ENCODE measurements at regions of chr19 and their contacts with region 1.

Region 1: GRCh38 chr19:8028951-8029491 is 23.5 kb upstream of the CCL25 start:
- DNase-seq: peak; percentile 80 to 91
- H3K4me3 ChIP-seq: no peak overlapping the region
- H3K4me3 Mint-ChIP-seq: peak overlapping the region; percentile 47
- H3K27ac Mint-ChIP-seq: peak overlapping the region; percentile 97
- H3K4me1 ChIP-seq: peaks cover 73% of the 10 kb centered on the region
- H3K4me1 Mint-ChIP-seq: peaks cover 22% of the 10 kb centered on the region
- H3K27me3 ChIP-seq: no peaks in the 10 kb centered on the region
- H3K27me3 Mint-ChIP-seq: no peaks in the 10 kb centered on the region
- CTCF ChIP-seq: peak; percentile 30 to 33

Region 2: DNA sequence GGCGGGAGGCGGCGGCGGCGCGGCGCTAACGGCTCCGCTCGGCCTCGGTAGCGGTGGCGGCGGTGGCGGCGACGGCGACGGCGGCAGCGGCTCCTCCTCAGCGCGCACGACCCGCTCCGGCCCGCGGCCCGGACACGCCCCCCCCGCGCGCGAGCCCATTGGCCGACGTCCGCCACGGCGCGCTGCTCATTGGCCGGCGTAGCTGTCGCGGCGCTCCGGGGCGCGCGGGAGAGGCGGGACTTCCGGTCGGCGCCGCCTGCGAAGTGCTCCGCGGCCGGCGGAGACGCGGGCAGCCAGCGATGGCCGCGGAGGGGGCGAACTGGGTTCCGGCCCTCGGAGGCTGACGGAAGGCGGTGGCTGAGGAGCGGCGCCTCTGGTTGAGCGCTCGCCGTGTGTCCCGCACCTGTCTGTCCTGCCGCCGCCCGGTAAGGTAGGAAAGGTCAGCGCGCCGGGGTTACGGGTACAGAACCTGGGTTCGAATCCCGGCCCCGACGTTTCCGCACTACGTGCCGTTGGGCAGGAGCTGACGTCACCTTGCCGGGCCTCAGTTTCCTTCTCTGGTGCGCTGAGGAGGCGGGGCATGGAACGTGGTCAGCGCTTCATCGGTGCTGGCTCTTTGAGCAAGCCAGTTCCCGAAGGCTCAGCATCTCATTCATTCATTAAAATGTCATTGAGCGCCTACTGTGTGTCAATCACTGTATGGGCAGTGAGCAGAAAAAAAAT is 23.3 kb before region 1 on chr19 and contains the start of gene ELAVL1:
- CTCF ChIA-PET with region 1: interaction called, 6 read pairs
- POLR2A ChIA-PET with region 1: interaction called, 11 read pairs
- intact Hi-C with region 1: no loop called
- DNase-seq: peak; percentile 84 to 95
- H3K4me3 ChIP-seq: peak within 1 kb of the TSS; percentile 99
- H3K4me3 Mint-ChIP-seq: peak within 1 kb of the TSS; percentile 83
- H3K27ac Mint-ChIP-seq: peak within 1 kb of the TSS; percentile 16
- H3K4me1 ChIP-seq: peaks cover 12% of the 10 kb centered on the region; the same call in 1 of the 2 replicates
- H3K4me1 Mint-ChIP-seq: peaks cover 18% of the 10 kb centered on the region
- H3K27me3 ChIP-seq: no peaks in the 10 kb centered on the region
- H3K27me3 Mint-ChIP-seq: no peaks in the 10 kb centered on the region
- CTCF ChIP-seq: no peak
- total RNA-seq, gene ELAVL1: 117 and 118 TPM in 2 replicates

Region 3: GRCh38 chr19:8054169-8054568 is 25.1 kb after region 1 on chr19:
- CTCF ChIA-PET with region 1: no interaction called
- POLR2A ChIA-PET with region 1: no interaction called
- intact Hi-C with region 1: no loop called
- DNase-seq: no peak
- H3K4me3 ChIP-seq: no peak overlapping the region
- H3K4me3 Mint-ChIP-seq: no peak overlapping the region
- H3K27ac Mint-ChIP-seq: no peak overlapping the region
- H3K4me1 ChIP-seq: peaks cover 4% of the 10 kb centered on the region; the same call in 1 of the 2 replicates
- H3K4me1 Mint-ChIP-seq: peaks cover 7% of the 10 kb centered on the region
- H3K27me3 ChIP-seq: no peaks in the 10 kb centered on the region
- H3K27me3 Mint-ChIP-seq: no peaks in the 10 kb centered on the region
- CTCF ChIP-seq: no peak

Region 4: DNA sequence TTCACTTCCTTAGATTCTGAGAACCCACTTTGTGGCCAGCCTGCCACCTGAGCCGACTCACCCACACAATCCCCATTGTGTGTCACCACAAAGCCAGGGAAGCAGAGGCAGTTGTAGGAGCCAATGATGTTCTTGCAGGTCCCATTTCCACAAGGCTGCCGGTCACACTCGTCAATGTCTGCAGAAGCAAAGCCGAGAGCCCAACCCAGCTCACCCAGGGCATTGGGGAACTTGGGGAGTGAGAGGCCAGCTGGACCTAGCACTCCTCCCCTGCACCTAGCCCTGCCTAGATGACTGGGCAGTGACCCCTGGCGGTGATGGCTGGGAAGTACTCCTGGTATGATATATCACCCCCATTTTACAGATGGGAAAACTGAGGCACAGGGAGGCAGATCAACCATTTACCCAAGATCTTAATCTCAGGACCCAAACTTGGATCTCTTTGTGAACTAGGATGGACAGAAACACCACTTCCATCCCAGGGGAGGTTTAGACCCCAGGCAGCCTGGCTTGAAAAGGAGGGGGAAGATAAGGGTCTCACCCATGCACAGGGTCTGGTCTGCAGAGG is 67.0 kb after region 1 on chr19:
- CTCF ChIA-PET with region 1: no interaction called
- POLR2A ChIA-PET with region 1: no interaction called
- intact Hi-C with region 1: no loop called
- DNase-seq: no peak
- H3K4me3 ChIP-seq: no peak overlapping the region
- H3K4me3 Mint-ChIP-seq: no peak overlapping the region
- H3K27ac Mint-ChIP-seq: no peak overlapping the region
- H3K4me1 ChIP-seq: no peaks in the 10 kb centered on the region
- H3K4me1 Mint-ChIP-seq: no peaks in the 10 kb centered on the region
- H3K27me3 ChIP-seq: no peaks in the 10 kb centered on the region
- H3K27me3 Mint-ChIP-seq: no peaks in the 10 kb centered on the region
- CTCF ChIP-seq: no peak

Measured in Caco-2 (cell line).